Sciatic nerve (tissue), 2 donors: ENCODE measurements at regions of chr14 and their contacts with region 1.

Region 1: DNA sequence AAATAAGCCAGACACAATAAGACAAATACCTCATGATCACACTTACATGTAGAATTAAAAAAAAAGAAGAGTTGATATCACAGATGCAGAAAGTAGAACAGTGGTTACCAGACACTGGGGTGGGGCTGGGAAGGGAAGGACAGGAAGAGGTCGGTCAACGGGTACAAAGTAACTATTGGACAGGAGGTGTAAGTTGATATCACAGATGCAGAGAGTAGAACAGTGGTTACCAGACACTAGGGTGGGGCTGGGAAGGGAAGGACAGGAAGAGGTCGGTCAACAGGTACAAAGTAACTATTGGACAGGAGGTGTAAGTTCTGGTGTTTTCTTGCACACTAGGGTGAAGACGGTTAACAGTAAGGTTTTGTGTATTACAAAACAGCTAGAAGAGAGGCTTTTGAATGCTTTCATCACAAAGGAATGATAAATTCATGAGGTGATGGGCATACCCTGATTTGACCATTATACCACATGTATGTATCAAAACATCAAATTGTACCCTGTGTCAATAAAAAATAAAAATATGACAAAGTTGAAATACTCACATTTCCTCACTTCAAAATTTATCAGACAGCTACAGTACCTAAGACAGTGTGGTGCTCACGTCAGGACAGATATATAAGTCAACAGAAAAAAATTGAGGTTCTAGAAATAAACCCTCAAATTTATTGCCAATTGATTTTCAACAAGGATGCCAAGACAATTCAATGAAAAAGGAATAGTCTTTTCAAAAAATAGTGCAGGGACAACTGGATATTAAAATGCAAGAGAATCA is 32.8 kb downstream of the GALC start:
- DNase-seq: no peak
- ATAC-seq: no peak

Region 2: DNA sequence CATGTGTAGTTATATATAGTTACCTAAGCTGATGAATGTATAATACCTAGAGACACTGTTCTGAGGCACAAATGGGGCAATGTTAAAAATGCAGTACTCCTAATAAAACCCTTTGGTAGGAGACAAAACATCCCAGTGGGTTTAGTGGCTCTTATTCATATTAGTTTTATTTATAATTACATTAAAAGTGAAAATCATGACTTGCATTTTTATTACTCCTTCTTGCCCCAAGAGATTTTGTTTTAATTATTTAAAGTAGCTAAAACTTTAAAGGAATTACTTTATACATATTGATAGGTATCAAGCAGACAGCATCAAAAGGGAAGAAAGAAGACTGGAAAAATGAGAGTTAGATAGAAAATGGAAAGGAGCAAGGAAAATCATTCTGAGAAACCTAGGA is 655.8 kb before region 1 on chr14:
- intact Hi-C with region 1: loop called (anchors 5 kb)
- DNase-seq: no peak
- ATAC-seq: no peak

Region 3: GRCh38 chr14:87772854-87773253 is 187.3 kb before region 1 on chr14:
- intact Hi-C with region 1: no loop called
- DNase-seq: no peak
- ATAC-seq: no peak